ENCODE measurements at regions of chr12 and their contacts with region 1.

Region 1: GRCh38 chr12:51980051-51980808 is 26.5 kb upstream of the TAMALIN start:
- DNase-seq: peak; percentile 79
- ATAC-seq: peak; percentile 96
- H3K4me3 Mint-ChIP-seq: no peak overlapping the region
- H3K27ac Mint-ChIP-seq: peak overlapping the region; percentile 51
- H3K4me1 Mint-ChIP-seq: peaks cover 38% of the 10 kb centered on the region
- H3K27me3 Mint-ChIP-seq: no peaks in the 10 kb centered on the region

Region 2: GRCh38 chr12:51923501-51924271 is 56.5 kb before region 1 on chr12:
- CTCF ChIA-PET with region 1: interaction called, 46 read pairs
- POLR2A ChIA-PET with region 1: no interaction called
- DNase-seq: peak; percentile 61
- ATAC-seq: peak; percentile 82
- H3K4me3 Mint-ChIP-seq: no peak overlapping the region
- H3K27ac Mint-ChIP-seq: no peak overlapping the region
- H3K4me1 Mint-ChIP-seq: peaks cover 4% of the 10 kb centered on the region
- H3K27me3 Mint-ChIP-seq: peaks cover 10% of the 10 kb centered on the region

Measured in activated CD8-positive, alpha-beta T cell treated with anti-CD3 and anti-CD28 coated beads, Interleukin-2, amount 10 ng/mL, durations not matched to agents 7 days and 5 days (primary cell).